Posterior cingulate gyrus (tissue), 11 donors: ENCODE measurements at regions of chr20 and their contacts with region 1.

Region 1: DNA sequence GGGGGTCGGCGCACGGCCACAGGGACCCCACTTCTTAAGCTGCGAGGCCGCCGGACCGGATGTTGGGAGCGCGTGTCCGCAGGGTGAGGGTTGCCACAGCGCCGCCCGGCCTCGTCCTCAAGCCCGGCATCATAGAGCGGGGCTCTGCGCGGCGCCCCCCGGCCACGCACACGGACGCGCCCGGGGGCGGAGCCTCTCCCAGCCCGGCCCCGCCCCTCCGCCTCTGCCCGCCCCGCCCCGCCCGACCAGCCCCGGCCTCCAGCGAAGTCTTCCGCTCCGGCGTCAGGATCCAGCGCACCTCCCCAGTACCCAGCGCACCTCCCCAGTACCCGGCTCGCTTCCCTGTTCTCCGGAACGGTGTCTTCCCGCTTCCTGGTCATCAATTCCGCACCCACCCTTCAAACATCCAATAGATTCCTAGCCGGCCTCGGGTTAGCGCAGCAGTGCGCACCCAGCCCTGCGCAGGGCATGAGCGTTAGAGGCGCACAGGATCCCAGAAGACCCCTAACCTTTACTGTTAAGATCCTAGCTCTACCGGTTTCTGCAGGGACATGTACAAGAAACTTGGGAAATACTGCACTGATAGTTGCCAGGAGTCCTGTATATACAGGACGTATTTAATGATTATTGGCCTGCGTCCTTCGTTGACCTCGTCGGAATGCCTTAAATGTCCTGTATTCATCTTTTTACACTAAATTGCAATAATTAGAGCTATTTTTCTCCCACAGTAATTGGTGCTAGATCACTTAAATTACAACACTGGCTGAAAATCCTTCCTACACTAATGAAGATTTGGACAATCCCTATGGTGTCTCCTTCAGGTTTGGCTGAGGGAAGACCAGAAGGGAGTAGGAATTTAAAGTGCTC is 535 bp upstream of the DNAAF9 start:
- DNase-seq: peak; percentile 54 to 96 (median 78)

Region 2: GRCh38 chr20:3282271-3283221 is 125.5 kb before region 1 on chr20:
- intact Hi-C with region 1: no loop called
- DNase-seq: no peak

Region 3: DNA sequence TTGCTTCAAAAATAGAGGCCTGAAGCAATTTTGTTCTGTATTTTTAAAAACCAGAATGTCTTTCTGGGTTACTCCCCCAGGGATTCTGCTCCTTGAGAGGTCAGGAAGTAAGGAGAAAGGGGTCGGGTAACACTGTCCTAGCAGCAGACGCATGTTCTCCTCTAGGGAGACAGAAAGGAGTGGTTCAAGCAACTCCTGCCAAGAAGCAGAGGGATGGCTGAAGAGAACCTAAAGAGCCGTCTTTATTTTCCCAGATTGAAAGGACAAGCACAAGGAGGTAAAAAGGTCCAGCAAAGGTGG is 111.0 kb before region 1 on chr20:
- intact Hi-C with region 1: no loop called
- DNase-seq: no peak

Region 4: GRCh38 chr20:3470627-3471396 is 62.8 kb after region 1 on chr20 and contains the start of gene ATRN:
- intact Hi-C with region 1: loop called (anchors 5 kb)
- DNase-seq: peak; percentile 85 to 98 (median 88)